ENCODE measurements at regions of chr2 and their contacts with region 1.

Region 1: DNA sequence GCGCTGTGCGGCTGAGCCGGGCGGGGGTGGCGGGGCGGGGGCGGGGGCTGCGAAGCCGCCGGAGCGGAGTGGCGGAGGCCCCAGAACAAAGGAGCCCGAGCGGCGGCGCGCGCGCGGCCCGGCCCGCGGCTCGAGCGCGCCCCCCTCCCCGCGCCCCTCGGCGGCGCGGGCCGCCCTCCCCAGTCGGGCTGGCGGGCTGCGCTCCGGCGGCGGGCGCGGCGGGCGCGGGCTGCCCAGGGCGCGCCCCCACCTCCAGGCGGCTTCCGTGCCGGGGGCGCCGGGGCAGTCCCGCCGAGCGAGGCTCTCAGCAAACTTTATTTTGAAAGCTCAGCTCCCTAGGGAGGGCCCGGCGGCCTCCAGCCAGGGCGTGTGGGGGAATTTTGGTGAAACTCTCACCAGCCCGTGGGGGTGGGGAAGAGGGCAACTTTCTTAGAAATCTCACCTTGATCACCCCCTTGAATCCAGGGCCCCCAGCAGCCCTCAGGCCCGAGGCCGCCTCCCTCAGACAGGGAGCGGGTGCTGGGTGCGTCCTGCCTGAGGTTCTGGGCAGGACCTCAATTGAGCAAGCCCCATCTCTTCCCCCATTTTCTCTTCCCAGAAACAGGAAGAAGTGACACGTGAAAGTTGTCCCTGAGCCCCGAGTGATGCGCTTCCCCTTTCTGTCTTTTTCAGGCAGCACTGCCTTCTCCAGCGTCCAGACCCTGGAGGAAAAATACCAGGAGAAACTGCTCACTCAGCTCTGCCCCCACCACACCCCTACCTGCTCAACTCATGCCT is 786 bp downstream of the TET3 start:
- DNase-seq: peak in 1 of 2 experiments; percentile 17
- H3K4me3 ChIP-seq: peak overlapping the region; percentile 58
- H3K27ac ChIP-seq: peak overlapping the region; percentile 40; the same call in 1 of the 2 replicates
- H3K4me1 ChIP-seq: peaks cover 73% of the 10 kb centered on the region
- H3K27me3 ChIP-seq: no peaks in the 10 kb centered on the region
- CTCF ChIP-seq: no peak

Region 2: GRCh38 chr2:73926493-73927338 is 58.8 kb before region 1 on chr2 and contains the start of gene DGUOK:
- CTCF ChIA-PET with region 1: interaction called, 4 read pairs
- POLR2A ChIA-PET with region 1: no interaction called
- intact Hi-C with region 1: loop called (anchors 2 kb)
- DNase-seq: peak; percentile 93 to 98
- H3K4me3 ChIP-seq: peak within 1 kb of the TSS; percentile 80
- H3K27ac ChIP-seq: peak within 1 kb of the TSS; percentile 76
- H3K4me1 ChIP-seq: peaks cover 37% of the 10 kb centered on the region
- H3K27me3 ChIP-seq: no peaks in the 10 kb centered on the region
- CTCF ChIP-seq: no peak
- total RNA-seq, gene DGUOK: 72.3 and 78.7 TPM in 2 replicates

Measured in PC-9 (cell line).